ENCODE measurements at regions of chr17 and their contacts with region 1.

Region 1: GRCh38 chr17:21043286-21044232 is 748 bp upstream of the USP22 start:
- DNase-seq: peak; percentile 98
- H3K4me3 Mint-ChIP-seq: peak overlapping the region; percentile 76
- H3K27ac Mint-ChIP-seq: peak overlapping the region; percentile 95
- H3K4me1 Mint-ChIP-seq: peaks cover 28% of the 10 kb centered on the region
- H3K27me3 Mint-ChIP-seq: no peaks in the 10 kb centered on the region

Region 2: DNA sequence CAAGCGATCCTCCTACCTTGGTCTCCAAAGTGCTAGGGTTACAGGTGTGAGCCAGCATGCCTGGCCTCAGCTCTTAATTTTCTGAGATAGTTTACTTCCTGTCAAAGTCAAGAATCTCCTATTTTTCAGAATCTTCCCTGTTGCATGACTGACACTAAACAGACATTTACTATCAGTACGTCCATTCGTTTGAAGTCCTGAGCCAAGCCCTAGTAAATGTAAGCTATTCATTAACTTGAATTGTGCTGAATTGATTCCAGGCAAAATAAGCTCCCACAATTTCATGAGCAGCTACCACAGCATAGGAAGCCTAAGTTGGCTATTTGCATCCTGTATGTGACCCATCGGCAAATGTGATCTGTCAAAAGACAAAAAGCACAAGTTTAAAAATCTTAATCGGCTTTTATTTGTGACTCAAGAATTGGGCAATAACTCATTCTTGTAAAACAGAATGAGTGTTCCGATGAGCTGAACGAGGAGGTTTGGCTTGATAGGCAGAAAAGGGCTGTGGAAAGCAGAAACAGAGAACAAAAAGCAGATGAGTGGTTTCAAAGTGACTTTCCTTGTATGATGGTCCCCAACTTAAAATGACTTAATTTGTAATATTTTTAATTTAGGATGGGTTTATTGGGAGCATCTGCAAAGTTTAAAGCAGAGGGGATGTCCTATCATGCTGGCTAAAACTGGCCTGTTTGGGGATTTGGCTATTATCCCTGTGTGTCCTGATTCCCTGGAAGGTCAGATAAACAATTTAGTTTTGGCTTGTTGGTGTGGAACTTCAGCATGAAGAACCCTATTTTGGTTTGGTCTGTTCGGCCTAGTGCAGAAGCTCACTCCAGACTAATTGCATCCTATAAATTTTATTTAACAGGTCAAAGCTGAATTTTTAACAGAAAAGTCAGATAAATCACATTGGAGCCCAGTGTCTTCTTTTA is 1618.4 kb before region 1 on chr17:
- CTCF ChIA-PET with region 1: no interaction called
- intact Hi-C with region 1: no loop called
- DNase-seq: no peak
- H3K4me3 Mint-ChIP-seq: no peak overlapping the region
- H3K27ac Mint-ChIP-seq: no peak overlapping the region
- H3K4me1 Mint-ChIP-seq: no peaks in the 10 kb centered on the region
- H3K27me3 Mint-ChIP-seq: no peaks in the 10 kb centered on the region

Region 3: GRCh38 chr17:20155258-20156195 is 888.0 kb before region 1 on chr17:
- CTCF ChIA-PET with region 1: no interaction called
- intact Hi-C with region 1: loop called (anchors 2 kb)
- DNase-seq: peak; percentile 98
- H3K4me3 Mint-ChIP-seq: no peak overlapping the region
- H3K27ac Mint-ChIP-seq: no peak overlapping the region
- H3K4me1 Mint-ChIP-seq: peaks cover 7% of the 10 kb centered on the region
- H3K27me3 Mint-ChIP-seq: peaks cover 8% of the 10 kb centered on the region

Region 4: GRCh38 chr17:21029032-21029431 is 14.5 kb before region 1 on chr17:
- CTCF ChIA-PET with region 1: interaction called, 14 read pairs
- intact Hi-C with region 1: loop called (anchors 1 kb)
- DNase-seq: peak; percentile 57
- H3K4me3 Mint-ChIP-seq: no peak overlapping the region
- H3K27ac Mint-ChIP-seq: peak overlapping the region; percentile 80
- H3K4me1 Mint-ChIP-seq: peaks cover 76% of the 10 kb centered on the region
- H3K27me3 Mint-ChIP-seq: no peaks in the 10 kb centered on the region

Region 5: GRCh38 chr17:21126645-21127510 is 83.3 kb after region 1 on chr17 and contains the start of gene DHRS7B:
- CTCF ChIA-PET with region 1: interaction called, 6 read pairs
- intact Hi-C with region 1: loop called (anchors 1 kb)
- DNase-seq: peak; percentile 98
- H3K4me3 Mint-ChIP-seq: peak within 1 kb of the TSS; percentile 95
- H3K27ac Mint-ChIP-seq: peak within 1 kb of the TSS; percentile 94
- H3K4me1 Mint-ChIP-seq: peaks cover 35% of the 10 kb centered on the region
- H3K27me3 Mint-ChIP-seq: no peaks in the 10 kb centered on the region
- total RNA-seq, gene DHRS7B: 12.0 to 12.1 TPM

Region 6: DNA sequence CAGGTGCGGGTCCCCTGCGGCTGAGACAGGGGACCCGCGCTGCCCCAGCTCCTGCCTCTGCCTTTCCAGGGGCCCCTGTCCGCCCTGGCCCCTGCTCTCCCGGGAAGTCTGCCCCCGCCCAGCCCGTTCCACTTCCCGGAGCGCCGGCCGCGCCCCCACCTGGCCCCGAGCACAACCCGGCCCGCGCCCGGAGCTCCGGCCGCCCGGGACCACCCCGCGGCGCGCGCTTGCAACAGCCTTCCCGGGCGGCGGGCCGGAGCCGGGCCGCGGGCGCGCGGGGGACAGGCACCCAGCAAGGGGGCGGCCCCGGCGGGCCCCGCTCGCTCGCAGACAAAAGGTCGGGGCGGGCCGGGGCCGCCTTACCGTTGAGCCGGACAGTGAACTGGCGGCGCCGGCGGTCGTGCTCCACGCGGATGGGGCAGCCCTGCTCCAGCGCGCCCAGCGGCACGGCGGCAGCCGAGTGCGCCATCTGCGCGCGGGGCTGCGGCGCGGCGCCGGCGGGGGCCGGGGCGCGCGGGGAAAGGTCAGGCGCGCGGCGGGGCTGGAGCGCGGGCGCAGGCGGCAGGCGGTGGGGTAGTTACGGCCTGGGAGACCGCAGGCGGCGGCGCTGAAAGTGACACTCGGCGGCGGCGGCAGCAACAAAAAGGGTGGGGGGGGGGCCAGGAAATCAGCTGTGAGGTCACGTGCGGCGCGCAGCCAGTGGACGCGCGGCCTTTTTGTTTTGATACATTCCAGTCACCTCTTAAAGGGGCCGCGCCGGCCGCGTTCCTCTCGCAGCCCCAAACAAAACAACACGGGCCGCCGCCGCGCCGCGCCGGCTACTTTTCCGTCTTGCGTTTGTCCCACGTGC is 209.5 kb after region 1 on chr17 and contains the start of gene NATD1:
- CTCF ChIA-PET with region 1: no interaction called
- intact Hi-C with region 1: loop called (anchors 1 kb)
- DNase-seq: peak; percentile 82
- H3K4me3 Mint-ChIP-seq: peak within 1 kb of the TSS; percentile 79
- H3K27ac Mint-ChIP-seq: no peak within 1 kb of the TSS
- H3K4me1 Mint-ChIP-seq: peaks cover 19% of the 10 kb centered on the region
- H3K27me3 Mint-ChIP-seq: no peaks in the 10 kb centered on the region
- total RNA-seq, gene NATD1: 2.1 to 2.5 TPM

Region 7: DNA sequence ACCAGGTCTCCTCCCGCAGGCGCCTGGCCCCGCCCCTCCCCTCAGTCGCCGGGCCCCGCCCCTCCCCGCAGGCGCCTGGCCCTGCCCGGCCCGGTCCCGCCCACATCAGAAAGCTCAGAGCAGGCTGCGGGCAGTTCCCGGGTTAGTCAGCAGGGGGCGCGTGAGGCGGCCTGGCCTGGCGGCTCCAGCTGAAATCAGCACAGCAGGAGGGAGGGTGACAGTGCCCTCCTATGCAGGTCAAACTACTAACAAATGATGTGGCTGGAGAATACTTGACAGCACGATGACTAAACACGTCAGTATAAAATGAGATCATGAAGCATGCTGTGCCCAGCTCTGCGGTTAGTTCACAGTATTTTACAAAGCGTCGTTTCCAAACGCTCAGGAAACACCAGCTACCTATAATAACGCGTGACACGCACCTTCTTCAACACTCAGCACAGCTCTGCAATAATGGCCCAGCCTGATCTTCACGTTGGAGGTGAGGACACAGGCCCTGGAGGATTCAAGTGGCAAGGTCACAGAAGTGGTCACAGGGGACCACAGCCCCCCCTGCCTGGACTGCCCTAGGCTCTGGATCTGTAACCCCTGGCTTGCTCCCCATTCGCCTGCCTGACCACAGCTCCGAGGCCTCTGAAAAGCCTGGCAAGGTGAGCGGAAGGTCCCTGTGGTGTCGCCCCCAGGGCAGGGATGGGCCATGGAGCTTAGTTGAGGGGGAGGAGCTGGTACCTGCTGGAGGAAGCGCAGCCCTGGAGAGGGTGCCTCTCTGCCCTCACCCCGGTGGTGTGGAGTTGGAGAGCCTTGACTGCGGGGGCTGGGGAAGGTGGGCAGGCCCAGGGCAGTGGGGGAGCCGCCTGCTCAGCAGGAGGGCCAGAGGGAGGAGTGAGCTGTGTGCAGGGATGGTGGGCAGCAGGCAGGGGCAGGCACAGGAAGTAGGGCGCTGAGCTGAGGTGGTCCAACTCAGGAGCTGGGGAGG is 413.8 kb after region 1 on chr17:
- CTCF ChIA-PET with region 1: no interaction called
- intact Hi-C with region 1: loop called (anchors 10 kb)
- DNase-seq: peak; percentile 96
- H3K4me3 Mint-ChIP-seq: no peak overlapping the region
- H3K27ac Mint-ChIP-seq: peak overlapping the region; percentile 53
- H3K4me1 Mint-ChIP-seq: peaks cover 22% of the 10 kb centered on the region
- H3K27me3 Mint-ChIP-seq: peaks cover 8% of the 10 kb centered on the region

Region 8: DNA sequence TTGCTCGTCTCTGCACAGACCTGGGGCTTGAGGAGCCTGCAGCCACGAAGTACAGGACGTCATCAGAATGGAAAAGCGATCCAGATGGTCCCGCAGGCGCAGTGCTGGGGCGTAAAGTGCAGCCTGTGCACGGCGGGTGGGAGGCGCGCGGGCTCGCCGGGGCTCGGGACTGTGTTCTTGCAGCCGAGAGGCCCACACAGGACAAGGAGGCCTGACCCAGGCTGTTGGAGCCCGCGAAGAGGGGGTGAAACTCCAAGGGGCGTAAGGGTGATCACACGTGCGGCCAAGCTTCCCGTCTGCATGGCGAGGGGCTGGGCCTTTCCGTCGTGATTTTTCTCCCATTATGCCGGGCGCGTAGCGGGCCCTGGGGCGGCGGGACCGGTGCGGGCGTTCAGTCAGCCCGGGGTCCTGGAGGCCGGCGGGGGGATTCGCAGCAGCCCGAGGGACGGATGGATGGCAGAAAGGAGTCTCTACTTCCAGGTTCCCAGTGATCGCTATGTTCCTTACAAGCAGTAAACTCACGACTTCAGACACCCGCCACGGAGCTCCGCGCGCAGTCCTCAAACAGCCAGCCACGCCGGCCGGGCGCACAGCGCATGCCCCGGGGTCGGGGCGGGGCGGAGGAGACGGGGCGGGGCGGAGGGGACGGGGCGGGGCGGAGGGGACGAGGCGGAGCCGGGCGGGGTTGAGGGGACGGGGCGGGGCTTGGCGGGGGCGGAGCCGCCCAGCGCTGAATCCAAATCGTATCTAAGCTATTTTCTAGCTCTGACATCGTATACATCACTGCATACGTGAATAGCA is 507.7 kb after region 1 on chr17:
- CTCF ChIA-PET with region 1: no interaction called
- intact Hi-C with region 1: loop called (anchors 2 kb)
- DNase-seq: peak; percentile 79
- H3K4me3 Mint-ChIP-seq: peak overlapping the region; percentile 91
- H3K27ac Mint-ChIP-seq: peak overlapping the region; percentile 88
- H3K4me1 Mint-ChIP-seq: peaks cover 29% of the 10 kb centered on the region
- H3K27me3 Mint-ChIP-seq: peaks cover 11% of the 10 kb centered on the region